ENCODE measurements at regions of chr2 and their contacts with region 1.

Region 1: DNA sequence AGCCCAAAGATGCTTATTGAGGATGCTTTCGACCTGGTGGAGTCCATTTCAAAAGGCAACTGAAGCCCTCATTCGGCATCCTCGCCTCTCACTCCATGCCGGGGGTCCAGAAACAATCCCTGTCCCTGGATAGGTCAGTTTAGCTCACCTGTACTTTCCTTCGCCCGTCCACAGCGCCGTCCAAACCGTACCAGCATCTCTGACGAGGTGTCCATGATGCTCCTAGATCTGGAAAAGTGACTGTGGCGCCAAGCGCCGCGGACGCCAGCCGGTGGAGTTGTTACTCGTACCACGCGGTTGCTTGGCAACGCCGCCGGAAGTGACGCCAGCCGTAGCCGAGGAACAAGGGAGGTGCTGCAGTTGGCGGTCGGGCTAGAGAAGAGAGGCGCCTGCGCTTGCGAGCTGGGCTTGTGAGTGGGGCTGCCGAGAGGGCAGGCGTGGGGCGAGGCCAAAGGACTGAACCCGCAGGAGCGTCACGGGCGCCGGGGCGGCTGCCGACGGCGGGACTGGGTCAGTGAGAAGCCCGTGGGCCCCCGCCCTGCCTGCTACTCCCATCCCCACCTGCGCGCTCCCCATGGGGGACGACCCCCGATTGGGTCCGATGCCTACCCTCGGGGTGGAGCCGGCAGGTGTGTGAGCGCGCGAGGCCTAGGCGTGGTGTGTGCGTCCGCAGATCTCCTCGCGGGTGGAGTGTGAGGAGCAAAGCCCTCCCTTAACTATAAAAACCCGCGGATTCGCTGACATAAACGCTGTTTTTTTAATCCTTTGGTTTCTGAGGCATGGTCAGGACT is at the starts of genes CFAP210 and PHOSPHO2:
- DNase-seq: peak; percentile 100
- ATAC-seq: peak; percentile 100
- total RNA-seq, gene CFAP210: 0.16 TPM in 1 of 2 donors, not detected in the other
- total RNA-seq, gene PHOSPHO2: 3.4 to 3.9 TPM

Region 2: DNA sequence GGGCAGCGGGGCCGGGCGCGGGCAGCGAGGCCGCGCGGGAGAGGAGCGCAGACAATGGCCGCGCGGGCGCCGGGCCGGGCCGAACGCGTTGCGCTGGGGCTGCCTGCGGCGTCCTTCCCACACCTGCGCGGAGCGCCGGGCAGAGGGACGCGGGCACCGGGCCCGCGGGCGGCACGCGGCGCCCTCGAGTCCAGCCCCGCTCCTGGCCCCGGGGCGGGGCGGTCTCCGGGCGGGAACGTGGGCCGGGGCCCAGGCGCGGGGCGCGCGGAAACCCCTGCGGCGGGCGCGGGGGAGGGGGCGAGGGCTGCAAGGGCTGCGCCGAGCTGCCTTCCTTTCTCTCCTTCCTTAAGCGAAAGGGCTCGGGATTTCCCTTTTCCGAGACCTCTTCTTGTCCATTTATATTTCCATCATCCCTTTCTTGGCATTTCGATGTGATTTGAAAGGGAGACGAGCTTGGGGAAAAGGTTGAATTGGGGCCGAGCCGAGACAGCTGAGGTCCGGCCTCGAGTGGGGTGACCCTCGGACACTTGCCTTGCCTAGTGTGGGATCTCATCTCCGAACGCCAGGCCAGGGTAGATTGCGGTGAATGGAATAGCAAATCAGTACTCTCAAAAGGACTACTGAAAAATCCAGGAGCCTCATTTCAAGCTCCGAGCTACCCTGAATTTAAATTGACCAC is 40.0 kb after region 1 on chr2:
- intact Hi-C with region 1: loop called in 1 of 2 experiments (anchors 2 kb)
- DNase-seq: no peak
- ATAC-seq: peak; percentile 21 to 36

Measured in left cardiac atrium (tissue), 4 donors.